ENCODE measurements at regions of chr17 and their contacts with region 1.

Region 1: GRCh38 chr17:58112970-58113631 is 29.9 kb downstream of the DYNLL2 start:
- DNase-seq: peak; percentile 70
- H3K4me3 Mint-ChIP-seq: no peak overlapping the region
- H3K27ac Mint-ChIP-seq: no peak overlapping the region
- H3K4me1 Mint-ChIP-seq: peaks cover 6% of the 10 kb centered on the region
- H3K27me3 Mint-ChIP-seq: peaks cover 11% of the 10 kb centered on the region

Region 2: GRCh38 chr17:57858838-57859237 is 254.3 kb before region 1 on chr17:
- intact Hi-C with region 1: loop called (anchors 1 kb)
- DNase-seq: no peak
- H3K4me3 Mint-ChIP-seq: no peak overlapping the region
- H3K27ac Mint-ChIP-seq: no peak overlapping the region
- H3K4me1 Mint-ChIP-seq: peaks cover 10% of the 10 kb centered on the region
- H3K27me3 Mint-ChIP-seq: peaks cover 30% of the 10 kb centered on the region

Region 3: DNA sequence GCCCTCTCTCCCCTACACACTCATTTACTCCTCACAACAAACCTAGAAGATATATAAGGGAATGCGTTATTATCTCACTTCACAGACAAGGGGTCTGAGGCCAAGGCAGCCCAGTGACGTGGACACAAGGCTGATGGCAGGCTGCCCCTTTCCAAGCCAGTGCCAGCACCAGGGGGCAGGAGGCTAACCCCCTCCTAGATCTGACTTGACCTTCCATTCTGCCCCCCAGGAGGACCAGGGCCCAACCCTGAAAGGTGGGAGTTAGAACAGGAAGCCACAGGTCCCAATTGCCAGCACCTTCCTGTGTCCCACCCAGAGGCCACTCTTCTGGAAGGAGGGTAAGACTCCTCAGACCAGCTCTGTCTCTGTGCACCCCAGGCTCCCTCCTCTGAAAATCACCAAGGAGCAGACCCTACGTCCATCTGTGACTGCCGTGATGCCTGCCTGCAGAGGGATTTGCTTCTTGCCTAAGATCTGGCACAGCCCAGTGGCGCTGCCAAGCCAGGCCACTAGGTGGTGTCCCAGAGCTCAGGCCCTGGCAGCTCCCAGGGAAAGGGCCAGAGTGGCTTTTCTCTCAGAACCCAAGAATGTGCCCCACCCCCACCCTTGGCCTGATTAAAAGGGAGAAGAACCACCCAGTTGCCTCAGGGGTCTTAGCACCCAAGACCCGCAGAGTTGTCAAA is 220.8 kb before region 1 on chr17:
- intact Hi-C with region 1: loop called (anchors 1 kb)
- DNase-seq: peak; percentile 68
- H3K4me3 Mint-ChIP-seq: no peak overlapping the region
- H3K27ac Mint-ChIP-seq: no peak overlapping the region
- H3K4me1 Mint-ChIP-seq: no peaks in the 10 kb centered on the region
- H3K27me3 Mint-ChIP-seq: peaks cover 12% of the 10 kb centered on the region

Region 4: GRCh38 chr17:58364270-58364942 is 251.3 kb after region 1 on chr17:
- intact Hi-C with region 1: no loop called
- DNase-seq: no peak
- H3K4me3 Mint-ChIP-seq: no peak overlapping the region
- H3K27ac Mint-ChIP-seq: no peak overlapping the region
- H3K4me1 Mint-ChIP-seq: peaks cover 2% of the 10 kb centered on the region
- H3K27me3 Mint-ChIP-seq: no peaks in the 10 kb centered on the region

Measured in activated T-helper 1 cell treated with anti-CD3 and anti-CD28 coated beads, Interleukin-12 subunit alpha, Interleukin-12 subunit beta, Interleukin-2, Interleukin-4 antibody, amounts not matched to agents 30 ng/mL and 10 ng/mL and 1 ng/mL, durations not matched to agents 14 hours and 24 hours and 36 hours (primary cell).